HepG2 (cell line): ENCODE measurements at regions of chr3 and their contacts with region 1.

Region 1: GRCh38 chr3:167406875-167407492 is 26.9 kb upstream of the ZBBX start:
- DNase-seq: peak; percentile 56
- ATAC-seq: peak; percentile 99
- H3K4me3 ChIP-seq: no peak overlapping the region
- H3K27ac ChIP-seq: no peak overlapping the region
- H3K4me1 ChIP-seq: no peaks in the 10 kb centered on the region
- H3K27me3 ChIP-seq: no peaks in the 10 kb centered on the region
- CTCF ChIP-seq: peak; percentile 76
- EP300 ChIP-seq: no peak
- POLR2A ChIP-seq: no peak
- RAD21 ChIP-seq: peak; percentile 65

Region 2: GRCh38 chr3:167300210-167300609 is 106.8 kb before region 1 on chr3:
- CTCF ChIA-PET with region 1: no interaction called
- POLR2A ChIA-PET with region 1: no interaction called
- in situ Hi-C with region 1: no loop called
- intact Hi-C with region 1: no loop called
- DNase-seq: no peak
- ATAC-seq: no peak
- H3K4me3 ChIP-seq: no peak overlapping the region
- H3K27ac ChIP-seq: no peak overlapping the region
- H3K4me1 ChIP-seq: peaks cover 13% of the 10 kb centered on the region; the same call in 1 of the 2 replicates
- H3K27me3 ChIP-seq: no peaks in the 10 kb centered on the region
- CTCF ChIP-seq: no peak
- EP300 ChIP-seq: no peak
- POLR2A ChIP-seq: no peak
- RAD21 ChIP-seq: no peak

Region 3: GRCh38 chr3:167493244-167493643 is 86.3 kb after region 1 on chr3:
- CTCF ChIA-PET with region 1: interaction called, 4 read pairs
- POLR2A ChIA-PET with region 1: no interaction called
- in situ Hi-C with region 1: no loop called
- intact Hi-C with region 1: loop called (anchors 1 kb)
- DNase-seq: peak; percentile 22
- ATAC-seq: peak; percentile 100
- H3K4me3 ChIP-seq: no peak overlapping the region
- H3K27ac ChIP-seq: no peak overlapping the region
- H3K4me1 ChIP-seq: no peaks in the 10 kb centered on the region
- H3K27me3 ChIP-seq: no peaks in the 10 kb centered on the region
- CTCF ChIP-seq: peak; percentile 52
- EP300 ChIP-seq: no peak
- POLR2A ChIP-seq: no peak
- RAD21 ChIP-seq: peak; percentile 52; the same call in 1 of the 2 replicates

Region 4: GRCh38 chr3:167602041-167602440 is 195.1 kb after region 1 on chr3:
- CTCF ChIA-PET with region 1: no interaction called
- POLR2A ChIA-PET with region 1: no interaction called
- in situ Hi-C with region 1: no loop called
- intact Hi-C with region 1: no loop called
- DNase-seq: no peak
- ATAC-seq: no peak
- H3K4me3 ChIP-seq: no peak overlapping the region
- H3K27ac ChIP-seq: no peak overlapping the region
- H3K4me1 ChIP-seq: no peaks in the 10 kb centered on the region
- H3K27me3 ChIP-seq: no peaks in the 10 kb centered on the region
- CTCF ChIP-seq: no peak
- EP300 ChIP-seq: no peak
- POLR2A ChIP-seq: no peak
- RAD21 ChIP-seq: no peak

Region 5: DNA sequence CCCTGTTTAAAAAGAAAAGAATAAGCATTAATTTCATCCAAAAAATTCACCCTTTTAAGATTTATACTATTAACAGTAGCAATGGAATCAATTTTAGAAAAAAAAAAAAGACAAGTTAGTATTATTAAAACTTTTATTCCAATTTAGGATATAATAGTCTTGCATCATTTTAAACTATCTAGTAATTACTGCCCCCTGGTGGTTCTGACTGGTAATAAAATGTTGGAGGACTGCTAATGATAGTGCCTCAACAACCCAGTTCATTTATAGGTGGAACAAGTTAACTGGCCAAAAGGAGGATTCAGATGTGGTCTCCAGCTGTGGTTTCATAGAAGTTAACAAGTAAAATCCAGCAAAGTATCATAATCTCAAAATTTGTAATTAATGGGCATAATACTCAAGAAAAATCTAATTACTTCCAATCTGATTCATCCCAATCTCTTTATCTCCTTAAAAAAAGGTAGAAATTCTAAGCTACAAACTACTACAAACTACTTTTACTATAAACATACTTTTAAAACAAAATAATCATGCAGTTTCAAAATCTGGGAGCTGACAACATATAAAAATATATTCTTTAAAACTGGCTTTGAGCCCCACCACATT is 277.5 kb after region 1 on chr3:
- CTCF ChIA-PET with region 1: interaction called, 13 read pairs
- POLR2A ChIA-PET with region 1: no interaction called
- in situ Hi-C with region 1: loop called (anchors 25 kb)
- intact Hi-C with region 1: loop called (anchors 1 kb)
- DNase-seq: peak; percentile 64
- ATAC-seq: peak; percentile 82
- H3K4me3 ChIP-seq: no peak overlapping the region
- H3K27ac ChIP-seq: no peak overlapping the region
- H3K4me1 ChIP-seq: no peaks in the 10 kb centered on the region
- H3K27me3 ChIP-seq: no peaks in the 10 kb centered on the region
- CTCF ChIP-seq: peak; percentile 54
- EP300 ChIP-seq: no peak
- POLR2A ChIP-seq: no peak
- RAD21 ChIP-seq: no peak

Region 6: DNA sequence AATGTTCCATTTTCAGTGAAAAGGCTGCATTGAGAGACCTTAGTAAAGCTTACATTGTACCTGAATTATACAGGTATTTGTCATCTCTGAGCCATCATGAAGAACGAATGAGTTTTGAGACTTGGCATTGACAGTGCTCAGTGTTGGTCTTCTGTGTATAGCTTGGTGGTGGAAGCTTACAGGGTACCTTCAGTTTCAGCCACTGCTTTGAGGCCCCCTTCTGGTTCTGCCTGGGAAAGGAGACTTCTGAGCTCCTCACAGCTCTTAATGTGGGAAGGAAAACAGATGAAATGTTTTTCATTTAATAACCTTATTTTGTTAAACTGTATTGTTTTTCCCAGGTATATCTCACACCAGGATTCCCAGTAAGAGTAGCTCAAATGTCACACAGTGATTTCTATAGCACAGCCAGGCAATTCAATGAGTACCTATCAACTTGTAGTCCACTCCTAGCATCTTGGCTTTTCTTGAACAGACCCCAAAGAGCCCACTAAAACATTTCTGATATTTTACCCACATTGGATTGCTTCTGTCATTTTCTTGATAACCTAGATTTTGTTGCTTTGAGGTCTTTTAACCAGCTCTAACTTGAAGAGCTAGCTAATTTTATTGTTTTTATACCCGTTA is 334.1 kb after region 1 on chr3:
- CTCF ChIA-PET with region 1: no interaction called
- POLR2A ChIA-PET with region 1: no interaction called
- in situ Hi-C with region 1: no loop called
- intact Hi-C with region 1: loop called (anchors 1 kb)
- DNase-seq: peak; percentile 43
- ATAC-seq: peak; percentile 97
- H3K4me3 ChIP-seq: no peak overlapping the region
- H3K27ac ChIP-seq: no peak overlapping the region
- H3K4me1 ChIP-seq: peaks cover 49% of the 10 kb centered on the region
- H3K27me3 ChIP-seq: no peaks in the 10 kb centered on the region; a peak in 1 of 5 replicates
- CTCF ChIP-seq: peak; percentile 69
- EP300 ChIP-seq: no peak
- POLR2A ChIP-seq: no peak
- RAD21 ChIP-seq: peak; percentile 31; the same call in 1 of the 2 replicates

Region 7: GRCh38 chr3:167783781-167784180 is 376.8 kb after region 1 on chr3:
- CTCF ChIA-PET with region 1: no interaction called
- POLR2A ChIA-PET with region 1: no interaction called
- in situ Hi-C with region 1: no loop called
- intact Hi-C with region 1: no loop called
- DNase-seq: no peak
- ATAC-seq: no peak
- H3K4me3 ChIP-seq: no peak overlapping the region
- H3K27ac ChIP-seq: no peak overlapping the region
- H3K4me1 ChIP-seq: peaks cover 23% of the 10 kb centered on the region
- H3K27me3 ChIP-seq: no peaks in the 10 kb centered on the region
- CTCF ChIP-seq: no peak
- EP300 ChIP-seq: no peak
- POLR2A ChIP-seq: no peak
- RAD21 ChIP-seq: no peak

Region 8: GRCh38 chr3:167882067-167882667 is 475.2 kb after region 1 on chr3:
- CTCF ChIA-PET with region 1: interaction called, 11 read pairs
- POLR2A ChIA-PET with region 1: no interaction called
- in situ Hi-C with region 1: loop called (anchors 5 kb)
- intact Hi-C with region 1: loop called (anchors 1 kb)
- DNase-seq: peak; percentile 30
- ATAC-seq: 0 out of 3 replicates have a peak, but pooled peaks have one; percentile 31
- H3K4me3 ChIP-seq: no peak overlapping the region
- H3K27ac ChIP-seq: no peak overlapping the region
- H3K4me1 ChIP-seq: peaks cover 10% of the 10 kb centered on the region
- H3K27me3 ChIP-seq: no peaks in the 10 kb centered on the region; a peak in 1 of 5 replicates
- CTCF ChIP-seq: peak; percentile 50
- EP300 ChIP-seq: no peak
- POLR2A ChIP-seq: no peak
- RAD21 ChIP-seq: no peak

Region 9: DNA sequence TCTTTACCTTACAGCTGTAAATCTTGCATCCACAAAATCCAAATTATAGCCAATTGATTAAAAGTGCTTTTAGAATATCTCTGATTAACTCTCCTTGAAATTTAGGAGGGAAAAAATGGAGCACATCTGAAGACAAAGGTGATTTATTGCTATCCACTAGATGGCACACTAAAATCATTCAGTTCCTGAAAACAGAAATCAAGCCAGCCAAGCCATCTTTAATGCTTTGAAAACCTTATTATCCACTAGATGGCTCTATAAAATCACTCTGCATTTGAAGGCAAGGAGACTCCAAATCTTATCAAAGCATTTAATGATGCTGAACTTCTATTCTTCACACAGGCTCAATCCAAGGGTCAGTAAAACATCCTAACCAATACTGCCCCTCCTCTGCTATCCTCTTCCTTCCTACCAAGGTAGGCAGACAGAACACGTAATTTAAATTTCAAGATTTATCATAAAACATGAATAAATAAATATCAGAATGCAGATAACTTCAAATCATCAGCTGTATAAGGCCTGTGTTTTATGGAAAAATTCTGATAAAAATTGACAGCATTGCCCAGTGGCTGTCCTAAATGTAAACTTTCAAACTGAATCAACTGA is 640.3 kb after region 1 on chr3:
- CTCF ChIA-PET with region 1: no interaction called
- POLR2A ChIA-PET with region 1: no interaction called
- in situ Hi-C with region 1: no loop called
- intact Hi-C with region 1: loop called (anchors 10 kb)
- DNase-seq: peak; percentile 76
- ATAC-seq: peak; percentile 87
- H3K4me3 ChIP-seq: no peak overlapping the region
- H3K27ac ChIP-seq: no peak overlapping the region
- H3K4me1 ChIP-seq: no peaks in the 10 kb centered on the region
- H3K27me3 ChIP-seq: no peaks in the 10 kb centered on the region
- CTCF ChIP-seq: peak; percentile 89
- EP300 ChIP-seq: no peak
- POLR2A ChIP-seq: no peak
- RAD21 ChIP-seq: peak; percentile 78